ENCODE measurements at regions of chr12 and their contacts with region 1.

Region 1: GRCh38 chr12:76559400-76560085 is at the start of gene OSBPL8:
- DNase-seq: peak; percentile 96 to 99
- H3K4me3 ChIP-seq: peak within 1 kb of the TSS; percentile 91
- CTCF ChIP-seq: no peak
- POLR2A ChIP-seq: peak in 1 of 2 donors; percentile 74
- total RNA-seq, gene OSBPL8: 75.9 to 167 (median 108) TPM

Region 2: GRCh38 chr12:76384560-76384959 is 175.0 kb before region 1 on chr12:
- intact Hi-C with region 1: loop called (anchors 10 kb)
- DNase-seq: no peak
- H3K4me3 ChIP-seq: no peak overlapping the region
- CTCF ChIP-seq: no peak
- POLR2A ChIP-seq: no peak

Region 3: DNA sequence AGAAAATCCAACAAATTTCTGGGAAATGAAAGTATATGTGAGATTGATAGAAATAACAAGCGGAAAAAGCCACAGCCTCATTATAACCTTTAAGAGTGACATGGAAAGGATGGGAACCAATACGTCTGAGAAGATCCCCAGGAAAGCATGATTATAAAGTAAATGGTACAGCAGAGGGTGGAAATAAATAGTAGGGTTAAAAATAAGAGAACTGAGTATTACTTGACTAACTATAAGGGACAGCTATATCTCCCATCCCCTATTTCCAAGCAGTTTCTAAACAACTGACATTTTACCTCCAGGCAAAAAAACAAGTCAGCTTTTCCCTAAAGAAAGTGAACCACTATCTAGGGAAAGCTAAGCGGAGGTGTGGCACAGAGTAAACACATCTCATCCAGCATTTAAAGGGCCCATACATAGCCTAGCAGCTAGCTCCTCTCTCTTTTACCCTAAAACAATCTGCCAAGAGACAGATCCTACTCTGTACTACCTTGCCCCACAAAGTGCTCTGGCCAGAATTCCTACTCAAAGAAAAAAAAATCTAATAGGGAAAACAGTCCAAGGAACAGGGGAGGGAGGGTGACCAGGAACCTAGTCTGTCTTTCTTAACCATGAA is 11.2 kb before region 1 on chr12:
- intact Hi-C with region 1: no loop called
- DNase-seq: no peak
- H3K4me3 ChIP-seq: no peak overlapping the region
- CTCF ChIP-seq: no peak
- POLR2A ChIP-seq: no peak

Region 4: DNA sequence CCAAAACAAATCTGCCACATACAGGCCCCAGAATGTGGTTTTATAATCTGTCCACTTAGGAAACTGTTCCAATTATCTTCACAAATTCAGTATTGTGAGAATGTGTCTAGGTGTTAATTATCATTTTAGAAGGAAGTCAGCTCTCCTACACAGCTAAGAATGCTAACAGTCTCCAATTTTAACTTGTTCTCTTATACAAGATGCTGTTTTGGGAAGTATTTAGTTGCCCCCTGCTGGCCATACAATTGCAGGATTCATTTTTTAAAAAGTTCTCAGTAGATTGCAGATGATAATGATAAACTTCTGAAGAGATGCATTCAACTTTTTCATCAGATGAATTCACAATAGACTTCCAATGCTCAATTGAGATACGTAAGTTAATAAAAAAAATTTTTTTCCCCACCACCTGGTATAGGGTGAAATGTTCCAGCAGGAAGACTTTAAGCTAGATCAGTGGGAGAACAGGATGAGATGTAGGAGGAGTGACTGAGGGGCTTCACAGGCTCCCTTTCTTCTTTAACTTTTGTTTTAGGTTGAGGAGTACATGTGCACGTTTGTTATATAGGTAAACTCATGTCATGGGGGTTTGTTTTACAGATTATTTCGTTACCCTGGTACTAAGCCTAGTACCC is 27.3 kb after region 1 on chr12:
- intact Hi-C with region 1: no loop called
- DNase-seq: peak in 1 of 2 donors; percentile 42
- H3K4me3 ChIP-seq: no peak overlapping the region
- CTCF ChIP-seq: no peak
- POLR2A ChIP-seq: no peak

Measured in lower leg skin (tissue), 4 donors.